ENCODE measurements at regions of chr7 and their contacts with region 1.

Region 1: DNA sequence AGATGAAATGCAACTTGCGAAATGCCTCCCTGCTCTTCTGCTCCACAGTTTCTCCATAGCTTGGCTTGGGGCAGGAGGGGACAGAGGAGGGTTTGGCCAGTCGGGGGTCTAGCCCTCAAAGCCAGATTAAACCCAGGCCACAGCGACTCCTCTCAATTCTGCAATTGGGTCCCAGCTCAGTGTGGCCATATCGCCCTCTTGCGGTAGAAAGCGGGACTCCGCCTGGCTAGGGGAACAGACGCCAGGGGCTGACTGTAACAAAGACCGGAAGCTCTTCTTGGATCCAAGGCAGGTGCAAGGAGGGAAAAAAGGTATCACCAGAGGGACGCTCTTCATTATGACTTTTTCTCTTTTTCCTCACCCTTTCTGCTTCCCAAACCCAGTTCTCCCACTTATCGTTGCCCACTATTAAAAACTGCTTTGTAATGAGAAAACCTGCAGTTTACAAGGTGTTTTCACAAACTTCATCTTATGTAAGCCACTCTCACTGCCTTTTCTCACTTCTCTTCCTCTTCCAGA is 36.6 kb upstream of the TNPO3 start:
- DNase-seq: peak; percentile 82
- CTCF ChIP-seq: peak; percentile 95

Region 2: DNA sequence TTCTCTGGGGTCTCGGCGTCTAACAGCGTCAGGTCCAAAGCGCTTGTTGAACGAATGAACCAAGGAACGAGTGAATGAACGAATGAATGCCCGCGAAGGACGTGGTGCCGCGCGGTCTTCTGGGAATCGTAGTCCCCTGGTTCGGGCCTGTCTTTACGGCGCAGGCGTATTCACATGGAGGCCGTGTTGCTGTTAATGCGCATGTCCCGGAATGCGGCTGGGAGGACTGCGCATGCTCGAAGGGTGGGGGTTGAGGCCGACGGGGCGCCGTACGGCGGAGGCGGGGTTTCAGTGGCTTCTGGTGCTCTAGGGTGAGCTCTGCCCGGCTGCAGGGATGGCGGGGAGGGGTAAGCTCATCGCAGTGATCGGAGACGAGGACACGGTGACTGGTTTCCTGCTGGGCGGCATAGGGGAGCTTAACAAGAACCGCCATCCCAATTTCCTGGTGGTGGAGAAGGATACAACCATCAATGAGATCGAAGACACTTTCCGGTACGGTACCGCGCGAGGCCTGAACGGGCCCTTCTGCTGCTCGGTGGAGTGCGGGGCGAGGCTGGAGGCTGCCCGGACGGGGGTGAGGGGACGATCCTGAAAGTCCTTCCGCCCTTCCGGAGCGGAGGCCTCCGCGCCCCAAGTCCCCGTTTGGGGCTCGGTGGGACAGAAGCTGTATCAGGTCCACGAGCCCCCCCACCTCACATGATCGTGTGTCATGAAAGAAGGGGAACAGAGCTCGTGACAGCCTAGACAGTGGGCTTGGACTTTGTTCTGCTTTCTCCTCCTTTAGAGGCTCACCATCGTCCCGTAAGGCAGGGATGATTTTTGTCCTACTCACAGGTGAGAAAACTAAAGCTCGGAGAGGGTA is 228.7 kb before region 1 on chr7 and contains the start of gene ATP6V1F:
- CTCF ChIA-PET with region 1: interaction called, 17 read pairs
- POLR2A ChIA-PET with region 1: no interaction called
- DNase-seq: peak; percentile 99
- CTCF ChIP-seq: no peak

Region 3: GRCh38 chr7:128940494-128941322 is 150.8 kb before region 1 on chr7:
- CTCF ChIA-PET with region 1: interaction called, 27 read pairs
- POLR2A ChIA-PET with region 1: interaction called, 5 read pairs
- DNase-seq: peak; percentile 91
- CTCF ChIP-seq: no peak

Region 4: GRCh38 chr7:129101746-129102145 is 10.2 kb after region 1 on chr7:
- CTCF ChIA-PET with region 1: interaction called, 45 read pairs
- POLR2A ChIA-PET with region 1: no interaction called
- DNase-seq: no peak
- CTCF ChIP-seq: no peak

Region 5: GRCh38 chr7:129122751-129123509 is 31.4 kb after region 1 on chr7:
- CTCF ChIA-PET with region 1: interaction called, 22 read pairs
- POLR2A ChIA-PET with region 1: no interaction called
- DNase-seq: peak; percentile 73
- CTCF ChIP-seq: no peak

Region 6: GRCh38 chr7:129169171-129169671 is 77.7 kb after region 1 on chr7:
- CTCF ChIA-PET with region 1: interaction called, 14 read pairs
- POLR2A ChIA-PET with region 1: interaction called, 3 read pairs
- DNase-seq: peak; percentile 69
- CTCF ChIP-seq: no peak